HEK293T (cell line): ENCODE measurements at regions of chr17 and their contacts with region 1.

Region 1: DNA sequence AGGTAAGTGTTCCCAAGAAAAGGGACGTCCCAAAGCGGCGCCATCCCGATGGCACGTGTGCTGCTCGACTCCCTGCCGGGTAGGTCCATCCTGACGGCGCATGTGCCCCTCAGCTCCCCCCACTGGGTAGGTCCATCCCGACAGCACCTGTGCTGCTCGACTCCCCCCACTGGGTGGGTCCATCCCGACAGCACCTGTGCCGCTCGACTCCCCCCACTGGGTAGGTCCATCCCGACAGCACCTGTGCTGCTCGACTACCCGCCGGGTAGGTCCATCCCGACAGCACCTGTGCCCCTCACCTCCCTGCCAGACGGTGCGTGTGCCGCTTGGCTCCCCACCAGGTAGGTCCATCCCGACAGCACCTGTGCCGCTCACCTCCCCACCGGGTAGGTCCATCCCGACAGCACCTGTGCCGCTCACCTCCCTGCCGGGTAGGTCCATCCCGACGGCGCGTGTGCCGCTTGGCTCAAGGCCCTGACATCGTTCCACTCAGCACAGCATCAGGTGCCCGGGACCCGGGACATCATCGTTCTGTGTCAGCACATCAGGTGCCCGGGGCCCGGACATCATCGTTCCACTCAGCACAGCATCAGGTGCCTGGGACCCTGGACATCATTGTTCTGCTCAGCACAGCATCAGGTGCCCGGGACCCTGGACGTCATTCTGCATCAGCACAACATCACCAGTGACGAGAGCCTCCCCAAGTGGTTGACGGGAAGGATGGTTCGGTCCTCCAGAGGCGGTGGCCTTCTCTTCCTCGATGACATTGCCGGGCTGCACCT is 5.7 kb upstream of the FN3K start:
- DNase-seq: no peak

Region 2: DNA sequence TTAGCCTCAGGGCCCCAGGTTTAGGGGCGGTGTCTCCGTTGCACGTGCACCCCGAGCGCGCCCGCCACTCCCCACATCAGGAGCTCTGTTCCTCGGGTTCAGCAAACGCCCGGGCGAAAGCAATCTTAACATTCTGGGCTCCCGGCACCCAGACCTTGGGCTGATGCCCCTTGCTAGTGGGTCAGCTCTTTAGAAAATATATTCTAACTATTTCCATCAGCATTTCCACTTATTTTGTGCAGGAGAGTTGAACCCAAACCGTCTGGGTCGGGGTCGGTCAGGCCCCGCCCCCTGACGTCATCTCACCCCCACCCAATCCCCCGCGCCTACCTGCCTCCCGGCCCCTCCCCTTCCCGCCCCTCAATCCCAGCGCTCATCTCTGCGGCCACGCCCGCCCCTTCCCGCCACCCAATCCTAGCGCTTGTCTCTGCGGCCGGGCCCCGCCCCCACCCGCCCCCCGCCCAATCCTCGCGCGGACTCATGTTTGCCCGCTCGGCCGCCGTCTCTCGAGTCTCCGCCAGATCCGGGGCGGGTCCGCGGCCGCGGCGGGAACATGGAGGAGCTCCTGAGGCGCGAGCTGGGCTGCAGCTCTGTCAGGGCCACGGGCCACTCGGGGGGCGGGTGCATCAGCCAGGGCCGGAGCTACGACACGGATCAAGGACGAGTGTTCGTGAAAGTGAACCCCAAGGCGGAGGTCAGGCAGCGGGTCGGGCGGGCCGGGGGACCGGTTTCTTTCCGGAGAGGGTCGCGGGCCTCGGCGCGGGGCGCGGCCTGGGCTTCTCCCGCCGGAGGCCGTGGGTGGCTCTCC is 13.3 kb before region 1 on chr17 and contains the start of gene FN3KRP:
- CTCF ChIA-PET with region 1: no interaction called
- POLR2A ChIA-PET with region 1: interaction called, 14 read pairs
- DNase-seq: peak; percentile 100